Activated CD4-positive, alpha-beta T cell treated with anti-CD3 and anti-CD28 coated beads, Interleukin-2, amount 10 ng/mL, durations not matched to agents 24 days and 14 days (primary cell): ENCODE measurements at regions of chrX and their contacts with region 1.

Region 1: GRCh38 chrX:137031517-137032340 is 2.1 kb downstream of the GPR101 start:
- DNase-seq: peak; percentile 84
- H3K4me3 Mint-ChIP-seq: no peak overlapping the region
- H3K27ac Mint-ChIP-seq: no peak overlapping the region
- H3K4me1 Mint-ChIP-seq: peaks cover 11% of the 10 kb centered on the region
- H3K27me3 Mint-ChIP-seq: peaks cover 65% of the 10 kb centered on the region

Region 2: GRCh38 chrX:136961594-136962135 is 70.1 kb before region 1 on chrX:
- intact Hi-C with region 1: loop called (anchors 5 kb)
- DNase-seq: no peak
- H3K4me3 Mint-ChIP-seq: no peak overlapping the region
- H3K27ac Mint-ChIP-seq: no peak overlapping the region
- H3K4me1 Mint-ChIP-seq: peaks cover 7% of the 10 kb centered on the region
- H3K27me3 Mint-ChIP-seq: no peaks in the 10 kb centered on the region

Region 3: DNA sequence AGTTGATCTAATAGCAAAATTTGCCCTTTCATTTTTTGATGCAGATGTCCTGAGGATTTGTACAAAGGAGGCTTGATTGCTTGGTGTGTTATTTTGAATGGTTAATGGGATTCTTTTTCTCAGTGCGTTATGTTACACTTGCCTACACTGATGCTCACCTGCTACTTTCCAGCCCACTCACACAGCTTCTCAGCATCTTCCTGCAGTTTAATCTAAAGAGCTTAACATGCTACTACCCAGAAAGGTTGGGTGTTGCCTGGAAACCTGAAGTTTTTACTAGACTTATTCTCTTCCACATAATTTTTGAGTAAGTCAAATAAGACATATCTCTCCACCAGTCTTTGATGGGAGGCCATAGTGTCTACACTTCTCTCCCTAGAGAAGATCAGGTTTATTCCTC is 12.0 kb after region 1 on chrX:
- intact Hi-C with region 1: no loop called
- DNase-seq: no peak
- H3K4me3 Mint-ChIP-seq: no peak overlapping the region
- H3K27ac Mint-ChIP-seq: no peak overlapping the region
- H3K4me1 Mint-ChIP-seq: no peaks in the 10 kb centered on the region
- H3K27me3 Mint-ChIP-seq: peaks cover 22% of the 10 kb centered on the region